Activated CD4-positive, alpha-beta memory T cell treated with anti-CD3 and anti-CD28 coated beads for 36 hours (primary cell): ENCODE measurements at regions of chr4 and their contacts with region 1.

Region 1: GRCh38 chr4:81494031-81494431 is 22.3 kb upstream of the RASGEF1B start:
- DNase-seq: no peak
- H3K4me3 Mint-ChIP-seq: no peak overlapping the region
- H3K27ac Mint-ChIP-seq: peak overlapping the region; percentile 64
- H3K4me1 Mint-ChIP-seq: peaks cover 47% of the 10 kb centered on the region
- H3K27me3 Mint-ChIP-seq: no peaks in the 10 kb centered on the region

Region 2: DNA sequence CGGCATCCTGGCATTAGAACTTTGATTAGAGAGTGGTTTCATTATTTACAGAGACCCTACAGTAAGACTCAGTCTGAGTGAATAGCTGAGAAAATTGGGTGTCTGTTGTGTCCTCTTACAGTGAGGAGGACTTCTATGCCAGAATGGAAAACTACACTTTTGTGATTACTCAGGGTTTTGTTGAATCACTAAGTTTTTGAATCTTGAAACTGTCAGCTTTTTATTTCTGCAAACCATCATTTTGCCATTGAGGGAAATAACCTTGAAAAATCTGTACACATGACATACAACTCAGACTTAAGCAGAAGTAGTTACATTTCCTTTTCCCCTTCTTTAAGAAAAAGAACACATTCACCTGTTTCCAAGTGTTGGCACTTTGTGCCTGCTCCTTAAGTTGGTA is 95.2 kb after region 1 on chr4:
- CTCF ChIA-PET with region 1: no interaction called
- POLR2A ChIA-PET with region 1: no interaction called
- intact Hi-C with region 1: loop called (anchors 2 kb)
- DNase-seq: no peak
- H3K4me3 Mint-ChIP-seq: no peak overlapping the region
- H3K27ac Mint-ChIP-seq: no peak overlapping the region
- H3K4me1 Mint-ChIP-seq: peaks cover 9% of the 10 kb centered on the region
- H3K27me3 Mint-ChIP-seq: no peaks in the 10 kb centered on the region